A673 (cell line): ENCODE measurements at regions of chr11 and their contacts with region 1.

Region 1: GRCh38 chr11:894575-895201 is 15.9 kb downstream of the CHID1 start:
- DNase-seq: no peak
- H3K4me3 ChIP-seq: no peak overlapping the region
- H3K27ac ChIP-seq: no peak overlapping the region
- H3K4me1 ChIP-seq: peaks cover 35% of the 10 kb centered on the region
- H3K27me3 ChIP-seq: no peaks in the 10 kb centered on the region
- CTCF ChIP-seq: no peak

Region 2: DNA sequence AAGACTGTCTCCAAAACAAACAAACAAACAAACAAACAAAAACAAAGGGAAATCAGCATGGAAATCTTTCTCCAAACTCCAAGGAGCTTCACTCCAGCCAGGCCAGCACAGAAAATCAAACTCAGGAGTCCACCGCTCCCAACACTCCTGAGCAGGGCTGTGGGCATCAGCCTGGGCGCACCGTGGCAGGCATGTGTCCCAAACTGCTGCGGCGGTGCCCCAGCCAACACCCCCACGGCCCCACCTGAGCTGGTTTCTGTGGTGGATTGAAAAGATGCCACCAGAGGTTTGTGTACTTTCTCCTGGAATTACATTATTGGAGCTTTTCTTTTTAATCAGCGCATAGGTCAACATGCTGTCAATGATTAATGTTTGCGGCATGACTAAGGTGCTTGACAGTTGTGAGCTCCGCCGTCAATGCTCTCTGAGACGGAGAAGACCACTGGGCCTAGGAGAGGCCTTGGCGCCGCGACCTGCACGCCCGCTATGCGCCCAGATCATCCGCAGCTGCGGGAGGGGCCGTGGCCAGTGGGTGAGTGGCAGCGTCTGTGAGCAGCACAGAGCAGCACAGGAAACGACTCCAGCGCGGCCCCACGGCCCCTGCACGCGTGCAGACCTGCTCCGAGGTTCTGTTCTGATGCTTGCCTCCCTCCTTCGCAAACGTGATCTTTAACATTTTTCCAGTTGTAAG is 239.5 kb before region 1 on chr11:
- CTCF ChIA-PET with region 1: no interaction called
- POLR2A ChIA-PET with region 1: no interaction called
- intact Hi-C with region 1: no loop called
- DNase-seq: no peak
- H3K4me3 ChIP-seq: no peak overlapping the region
- H3K27ac ChIP-seq: no peak overlapping the region
- H3K4me1 ChIP-seq: peaks cover under 1% of the 10 kb centered on the region
- H3K27me3 ChIP-seq: no peaks in the 10 kb centered on the region
- CTCF ChIP-seq: no peak

Region 3: DNA sequence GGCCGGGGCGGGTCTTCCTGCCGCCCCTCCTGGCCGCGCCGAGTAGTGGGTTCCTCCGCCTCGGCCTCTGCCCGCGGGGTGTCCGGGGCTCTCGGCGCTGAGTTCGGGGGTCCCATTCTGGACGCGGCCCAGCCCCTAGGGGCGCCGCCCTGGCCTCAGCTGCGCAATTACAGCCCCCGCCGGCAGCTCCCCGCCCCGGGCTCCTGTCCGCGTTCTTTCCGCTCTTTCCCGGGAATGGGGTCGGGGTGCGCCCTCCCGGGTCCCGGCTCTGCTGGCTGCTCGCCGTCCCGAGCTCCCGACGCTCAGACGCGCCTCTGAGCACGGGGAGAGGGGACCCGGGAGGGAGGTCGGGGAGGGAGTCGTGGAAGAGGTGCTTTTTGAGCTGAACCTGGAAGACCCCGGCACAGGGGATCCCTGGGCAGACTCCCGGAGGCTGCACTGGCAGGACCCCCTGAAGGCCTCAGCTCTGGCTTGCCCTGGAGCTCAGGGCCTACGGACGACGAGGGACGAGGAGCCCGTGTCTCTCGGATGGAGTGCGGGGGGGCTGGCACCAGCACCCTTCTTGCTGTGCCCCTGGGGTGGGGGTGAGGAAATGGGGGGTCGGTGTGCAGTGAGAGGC is 51.5 kb before region 1 on chr11:
- CTCF ChIA-PET with region 1: no interaction called
- POLR2A ChIA-PET with region 1: interaction called, 20 read pairs
- intact Hi-C with region 1: no loop called
- DNase-seq: no peak
- H3K4me3 ChIP-seq: peak overlapping the region; percentile 99
- H3K27ac ChIP-seq: no peak overlapping the region
- H3K4me1 ChIP-seq: peaks cover 13% of the 10 kb centered on the region
- H3K27me3 ChIP-seq: no peaks in the 10 kb centered on the region
- CTCF ChIP-seq: no peak

Region 4: GRCh38 chr11:914747-915501 is 20.2 kb after region 1 on chr11:
- CTCF ChIA-PET with region 1: interaction called, 11 read pairs
- POLR2A ChIA-PET with region 1: no interaction called
- intact Hi-C with region 1: no loop called
- DNase-seq: no peak
- H3K4me3 ChIP-seq: no peak overlapping the region
- H3K27ac ChIP-seq: no peak overlapping the region
- H3K4me1 ChIP-seq: peaks cover 3% of the 10 kb centered on the region
- H3K27me3 ChIP-seq: no peaks in the 10 kb centered on the region
- CTCF ChIP-seq: no peak